Heart left ventricle (tissue), 16 donors: ENCODE measurements at regions of chr12 and their contacts with region 1.

Region 1: GRCh38 chr12:9208229-9208628 is at the start of gene PZP:
- DNase-seq: no peak
- ATAC-seq: no peak
- H3K4me3 ChIP-seq: no peak within 1 kb of the TSS
- H3K27ac ChIP-seq: no peak within 1 kb of the TSS
- H3K4me1 ChIP-seq: no peaks in the 10 kb centered on the region
- H3K27me3 ChIP-seq: no peaks in the 10 kb centered on the region
- CTCF ChIP-seq: no peak
- POLR2A ChIP-seq: no peak
- total RNA-seq, gene PZP: 0.08 to 1.1 (median 0.64) TPM in 8 of 9 donors, not detected in the other

Region 2: DNA sequence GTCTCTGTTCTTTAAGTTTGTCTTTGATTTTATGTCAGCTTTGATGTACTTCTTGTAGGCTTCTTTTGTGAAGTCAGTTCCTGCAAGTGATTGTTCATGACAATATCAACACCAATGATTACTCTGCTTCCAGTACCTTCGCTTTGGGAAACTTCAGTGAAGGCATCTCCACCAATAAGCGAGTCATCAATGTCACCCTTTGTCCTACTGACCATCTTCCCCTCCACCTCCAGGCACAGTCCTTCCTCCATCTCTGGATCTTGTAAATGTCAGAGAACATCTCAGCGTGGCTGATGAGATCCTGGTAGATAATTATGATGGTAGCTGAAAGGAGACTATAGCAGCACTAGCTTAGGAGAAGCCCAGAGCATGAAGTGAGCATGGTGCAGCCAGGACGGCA is 52.1 kb before region 1 on chr12:
- intact Hi-C with region 1: loop called in 1 of 10 experiments (anchors 5 kb)
- DNase-seq: no peak
- ATAC-seq: no peak
- H3K4me3 ChIP-seq: no peak overlapping the region
- H3K27ac ChIP-seq: no peak overlapping the region
- H3K4me1 ChIP-seq: no peaks in the 10 kb centered on the region
- H3K27me3 ChIP-seq: no peaks in the 10 kb centered on the region
- CTCF ChIP-seq: no peak
- POLR2A ChIP-seq: no peak

Region 3: GRCh38 chr12:9256341-9256740 is 48.1 kb after region 1 on chr12:
- intact Hi-C with region 1: no loop called
- DNase-seq: no peak
- ATAC-seq: no peak
- H3K4me3 ChIP-seq: no peak overlapping the region
- H3K27ac ChIP-seq: no peak overlapping the region
- H3K4me1 ChIP-seq: no peaks in the 10 kb centered on the region
- H3K27me3 ChIP-seq: no peaks in the 10 kb centered on the region
- CTCF ChIP-seq: no peak
- POLR2A ChIP-seq: no peak